WTC11 (cell line): ENCODE measurements at regions of chr9 and their contacts with region 1.

Region 1: DNA sequence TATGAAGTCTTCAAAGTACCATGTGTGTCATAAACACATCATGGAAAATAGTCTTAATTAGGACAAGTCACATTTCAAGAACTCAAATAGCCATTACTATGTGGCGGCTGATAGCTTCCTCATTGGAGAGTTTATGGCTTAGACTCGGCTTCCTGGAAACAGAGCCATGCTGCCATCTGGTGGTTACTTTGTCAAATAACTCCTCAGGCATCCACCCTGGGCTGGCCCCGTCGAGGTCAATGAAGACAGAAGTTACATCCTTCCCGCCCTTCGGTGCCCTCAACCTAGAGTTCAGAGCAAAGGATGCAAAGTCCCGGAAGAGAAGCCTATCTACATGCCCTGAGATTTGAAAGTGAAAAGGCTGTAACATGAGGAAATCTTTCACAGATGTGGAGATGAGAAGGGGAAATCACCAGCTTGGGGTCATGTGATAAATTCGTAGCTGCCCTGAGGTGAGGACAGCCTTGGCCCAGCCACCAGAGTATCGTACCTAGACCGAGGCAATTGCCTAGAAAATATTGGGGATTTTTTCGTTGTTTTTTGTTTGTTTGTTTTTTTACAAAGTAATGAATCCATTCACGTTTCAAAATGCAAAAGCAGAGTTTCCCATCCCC is 45.5 kb upstream of the ZNF169 start:
- DNase-seq: peak; percentile 81
- ATAC-seq: peak; percentile 88
- H3K4me3 Mint-ChIP-seq: no peak overlapping the region
- H3K27ac Mint-ChIP-seq: no peak overlapping the region
- H3K4me1 Mint-ChIP-seq: peaks cover 20% of the 10 kb centered on the region
- H3K27me3 Mint-ChIP-seq: peaks cover 11% of the 10 kb centered on the region
- CTCF ChIP-seq: peak; percentile 61

Region 2: DNA sequence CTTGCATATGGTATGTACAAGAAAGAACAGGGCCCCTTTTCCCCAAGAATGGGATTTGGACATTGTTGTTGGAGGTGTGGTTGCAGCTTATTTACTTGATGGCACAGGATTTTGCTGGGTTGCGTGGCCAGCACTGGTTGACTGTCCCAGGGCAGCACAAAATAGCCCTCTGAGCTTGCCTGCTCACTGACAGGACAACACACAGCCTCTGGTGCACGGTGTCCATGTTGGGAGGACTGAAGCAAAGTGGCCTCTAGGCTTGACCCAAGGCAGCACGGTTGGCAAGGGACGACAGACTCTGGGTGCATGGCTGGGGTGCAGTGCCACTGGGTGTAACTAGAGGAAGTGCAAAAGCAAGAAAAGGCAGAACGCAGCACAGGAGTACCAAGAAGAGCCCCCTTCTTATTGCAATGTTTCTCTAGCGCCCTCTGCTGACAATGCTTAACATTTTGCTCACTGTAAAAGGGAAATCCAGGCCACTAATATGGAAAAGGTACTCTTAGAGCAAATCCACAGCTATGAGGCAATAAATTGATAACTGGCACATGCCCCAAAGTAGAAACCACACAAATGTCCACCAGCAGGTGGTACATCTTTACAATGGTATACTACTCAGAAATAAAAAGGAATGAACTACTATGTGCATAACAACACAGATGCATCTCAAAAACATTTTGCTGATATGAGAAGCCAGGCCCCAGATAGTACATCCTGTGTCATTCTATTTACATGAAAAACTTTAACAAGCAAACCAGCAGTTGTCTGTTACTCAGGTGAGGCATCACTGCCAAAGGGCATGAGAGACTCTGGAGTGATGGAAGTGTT is 211.1 kb before region 1 on chr9:
- CTCF ChIA-PET with region 1: interaction called, 28 read pairs
- POLR2A ChIA-PET with region 1: no interaction called
- DNase-seq: peak; percentile 56
- ATAC-seq: peak; percentile 93
- H3K4me3 Mint-ChIP-seq: no peak overlapping the region
- H3K27ac Mint-ChIP-seq: no peak overlapping the region
- H3K4me1 Mint-ChIP-seq: 0 out of 2 replicates have a peak, but pooled peaks cover 2% of the 10 kb centered on the region
- H3K27me3 Mint-ChIP-seq: no peaks in the 10 kb centered on the region; the same call in 1 of the 2 replicates
- CTCF ChIP-seq: peak; percentile 66; the same call in 1 of the 2 replicates

Region 3: GRCh38 chr9:94014065-94014654 is 199.5 kb before region 1 on chr9:
- CTCF ChIA-PET with region 1: interaction called, 156 read pairs
- POLR2A ChIA-PET with region 1: interaction called, 4 read pairs
- DNase-seq: no peak
- ATAC-seq: no peak
- H3K4me3 Mint-ChIP-seq: no peak overlapping the region
- H3K27ac Mint-ChIP-seq: no peak overlapping the region
- H3K4me1 Mint-ChIP-seq: no peaks in the 10 kb centered on the region
- H3K27me3 Mint-ChIP-seq: no peaks in the 10 kb centered on the region; the same call in 1 of the 2 replicates
- CTCF ChIP-seq: peak; percentile 48

Region 4: DNA sequence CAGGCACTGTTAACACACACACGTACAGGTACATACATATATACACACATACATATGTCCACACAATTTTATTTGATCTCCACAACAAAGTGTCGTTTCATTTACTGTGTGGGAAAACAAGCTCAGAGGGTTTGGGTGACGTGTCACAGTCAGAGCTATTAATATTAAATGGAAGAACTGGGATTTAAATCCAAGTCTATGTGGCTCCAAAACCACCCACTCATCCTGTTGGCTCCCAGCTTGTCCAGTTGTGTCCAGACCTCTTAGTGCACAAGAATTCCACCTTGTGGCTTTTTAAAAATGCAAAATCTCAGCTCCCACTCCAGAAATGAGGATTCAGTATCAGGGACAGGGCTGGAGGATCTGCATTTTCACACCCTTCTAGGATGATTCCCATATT is 181.7 kb before region 1 on chr9:
- CTCF ChIA-PET with region 1: interaction called, 12 read pairs
- POLR2A ChIA-PET with region 1: no interaction called
- DNase-seq: no peak
- ATAC-seq: no peak
- H3K4me3 Mint-ChIP-seq: peak overlapping the region; percentile 91
- H3K27ac Mint-ChIP-seq: no peak overlapping the region
- H3K4me1 Mint-ChIP-seq: peaks cover 14% of the 10 kb centered on the region
- H3K27me3 Mint-ChIP-seq: peaks cover 33% of the 10 kb centered on the region
- CTCF ChIP-seq: no peak

Region 5: DNA sequence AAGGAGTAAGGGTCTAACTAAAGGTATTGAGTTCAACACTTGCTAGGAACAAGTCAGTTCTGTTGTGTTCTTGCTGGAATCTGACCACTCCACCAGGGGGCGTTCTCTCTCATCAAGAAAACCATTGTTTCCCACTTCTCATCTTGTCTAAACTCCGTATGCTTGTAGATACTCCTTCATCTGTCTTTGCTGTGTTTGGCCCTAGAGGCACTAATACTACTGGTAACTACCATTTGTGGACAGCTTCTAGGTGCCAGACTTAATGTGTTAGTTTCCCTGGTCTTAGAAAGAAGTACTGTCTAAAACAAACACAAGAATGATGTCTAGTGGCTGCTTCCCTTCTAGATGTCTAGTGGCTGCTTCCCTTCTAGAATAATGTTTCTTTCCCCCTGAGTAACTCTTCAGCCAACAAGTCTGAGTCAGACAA is 148.1 kb before region 1 on chr9:
- CTCF ChIA-PET with region 1: interaction called, 52 read pairs
- POLR2A ChIA-PET with region 1: interaction called, 3 read pairs
- DNase-seq: peak; percentile 78
- ATAC-seq: peak; percentile 87
- H3K4me3 Mint-ChIP-seq: no peak overlapping the region
- H3K27ac Mint-ChIP-seq: no peak overlapping the region; the same call in 1 of the 2 replicates
- H3K4me1 Mint-ChIP-seq: peaks cover 5% of the 10 kb centered on the region
- H3K27me3 Mint-ChIP-seq: no peaks in the 10 kb centered on the region
- CTCF ChIP-seq: peak; percentile 84

Region 6: GRCh38 chr9:94084314-94084713 is 129.3 kb before region 1 on chr9 and contains the start of gene PTPDC1:
- CTCF ChIA-PET with region 1: interaction called, 12 read pairs
- POLR2A ChIA-PET with region 1: no interaction called
- DNase-seq: peak; percentile 78
- ATAC-seq: peak; percentile 90
- H3K4me3 Mint-ChIP-seq: peak within 1 kb of the TSS; percentile 47
- H3K27ac Mint-ChIP-seq: peak within 1 kb of the TSS; percentile 28
- H3K4me1 Mint-ChIP-seq: peaks cover 32% of the 10 kb centered on the region
- H3K27me3 Mint-ChIP-seq: no peaks in the 10 kb centered on the region
- CTCF ChIP-seq: no peak
- total RNA-seq, gene PTPDC1: 8.9 to 9.5 TPM (median 9.2 TPM) in 3 replicates

Region 7: GRCh38 chr9:94514722-94515121 is 301.1 kb after region 1 on chr9:
- CTCF ChIA-PET with region 1: no interaction called
- POLR2A ChIA-PET with region 1: no interaction called
- DNase-seq: no peak
- ATAC-seq: no peak
- H3K4me3 Mint-ChIP-seq: no peak overlapping the region
- H3K27ac Mint-ChIP-seq: no peak overlapping the region
- H3K4me1 Mint-ChIP-seq: peaks cover 8% of the 10 kb centered on the region
- H3K27me3 Mint-ChIP-seq: no peaks in the 10 kb centered on the region
- CTCF ChIP-seq: no peak